Colonic mucosa (tissue), 4 donors: ENCODE measurements at regions of chr11 and their contacts with region 1.

Region 1: DNA sequence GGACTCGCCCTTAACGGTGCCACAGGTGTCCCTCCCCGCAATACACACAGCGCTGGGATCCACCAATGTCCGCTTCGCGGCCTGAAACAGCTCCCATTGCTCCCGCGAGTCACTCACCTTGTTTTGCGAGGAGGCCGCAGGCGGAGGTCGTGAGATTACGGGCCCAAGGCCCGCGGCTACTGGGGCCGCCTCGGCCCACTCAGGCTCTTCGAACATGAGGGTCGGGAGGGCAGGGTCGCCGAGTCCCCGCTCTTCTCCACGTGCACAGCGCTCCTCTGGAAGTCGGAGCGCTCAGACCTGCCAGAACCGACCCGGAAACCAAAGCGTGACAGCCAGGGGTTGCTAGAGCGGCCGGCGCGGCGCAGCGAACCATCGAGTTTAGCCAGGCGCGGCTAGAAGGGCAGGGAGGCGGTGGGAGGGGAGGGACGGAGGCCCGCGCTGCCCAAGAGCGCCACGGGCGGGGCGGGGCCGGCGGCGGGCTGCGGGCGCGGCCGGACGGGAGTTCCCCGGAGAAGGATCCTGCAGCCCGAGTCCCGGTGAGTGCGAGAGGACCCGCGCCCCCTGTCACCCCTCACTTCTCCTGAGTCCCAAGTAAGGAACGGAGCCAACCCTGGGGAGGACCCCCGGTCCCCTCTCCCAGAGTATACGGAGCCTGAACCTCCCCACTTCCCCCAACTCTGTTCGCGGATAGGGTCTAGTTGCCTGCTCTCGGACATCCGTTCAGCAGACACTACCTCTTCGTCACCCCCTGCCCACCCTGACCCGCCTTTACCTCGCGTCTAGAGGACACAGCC is at the starts of genes ILK and RRP8:
- DNase-seq: peak; percentile 93
- H3K4me3 ChIP-seq: peak within 1 kb of the TSS; percentile 77
- H3K27ac ChIP-seq: peak within 1 kb of the TSS; percentile 89
- H3K4me1 ChIP-seq: peaks cover 18% of the 10 kb centered on the region
- H3K27me3 ChIP-seq: no peaks in the 10 kb centered on the region
- CTCF ChIP-seq: no peak
- total RNA-seq, gene ILK: 115 to 157 TPM
- total RNA-seq, gene RRP8: 17.5 to 25.7 TPM

Region 2: GRCh38 chr11:6473481-6474422 is 129.7 kb before region 1 on chr11 and contains the start of gene TRIM3:
- intact Hi-C with region 1: loop called (anchors 10 kb)
- DNase-seq: peak; percentile 96
- H3K4me3 ChIP-seq: peak within 1 kb of the TSS; percentile 58
- H3K27ac ChIP-seq: peak within 1 kb of the TSS; percentile 92
- H3K4me1 ChIP-seq: peaks cover 9% of the 10 kb centered on the region
- H3K27me3 ChIP-seq: no peaks in the 10 kb centered on the region
- CTCF ChIP-seq: no peak
- total RNA-seq, gene TRIM3: 30.0 to 59.0 TPM

Region 3: DNA sequence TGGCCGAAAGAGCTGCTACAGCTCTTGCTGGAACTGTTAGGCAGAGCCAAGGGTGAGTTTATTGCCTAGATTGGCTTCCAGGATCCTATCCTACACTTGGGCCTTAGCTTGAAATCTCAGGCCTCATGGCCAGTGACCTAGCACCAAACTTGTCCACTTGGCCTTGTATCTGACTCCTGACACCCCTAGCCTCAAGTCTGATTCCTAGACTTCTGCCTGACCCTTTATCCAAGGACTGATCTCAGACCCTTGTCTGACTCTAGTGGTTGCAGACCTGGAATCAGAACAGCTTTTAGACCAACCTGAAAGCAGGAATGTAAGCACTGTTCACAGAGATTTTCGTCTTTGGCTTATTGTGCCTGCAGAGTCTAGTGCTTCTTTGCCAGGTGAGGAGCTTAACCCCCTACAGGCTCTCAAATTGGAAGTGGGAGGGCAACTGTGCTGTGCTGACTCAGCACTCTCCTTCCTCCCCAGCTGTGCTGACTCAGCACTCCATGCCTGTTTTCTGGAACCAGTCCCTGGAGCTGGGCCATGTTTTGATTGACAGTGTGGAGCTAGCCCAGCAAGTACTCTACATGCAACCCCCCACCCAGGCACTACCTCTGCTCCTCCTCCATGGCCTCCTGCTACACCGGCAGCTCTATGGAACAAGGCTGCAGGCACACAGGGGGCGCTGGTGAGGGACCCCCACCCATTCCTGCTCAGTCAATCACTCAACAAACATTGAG is 35.1 kb before region 1 on chr11:
- intact Hi-C with region 1: no loop called
- DNase-seq: no peak
- H3K4me3 ChIP-seq: no peak overlapping the region
- H3K27ac ChIP-seq: no peak overlapping the region
- H3K4me1 ChIP-seq: no peaks in the 10 kb centered on the region
- H3K27me3 ChIP-seq: no peaks in the 10 kb centered on the region
- CTCF ChIP-seq: no peak

Region 4: GRCh38 chr11:6667733-6668374 is 64.4 kb after region 1 on chr11:
- intact Hi-C with region 1: loop called (anchors 5 kb)
- DNase-seq: no peak
- H3K4me3 ChIP-seq: no peak overlapping the region
- H3K27ac ChIP-seq: no peak overlapping the region
- H3K4me1 ChIP-seq: no peaks in the 10 kb centered on the region
- H3K27me3 ChIP-seq: no peaks in the 10 kb centered on the region
- CTCF ChIP-seq: peak; percentile 48